Activated CD4-positive, alpha-beta T cell treated with anti-CD3 and anti-CD28 coated beads for 36 hours (primary cell): ENCODE measurements at regions of chr7 and their contacts with region 1.

Region 1: GRCh38 chr7:142782922-142783900 is 12.4 kb downstream of the PRSS2 start:
- DNase-seq: peak; percentile 87
- ATAC-seq: peak; percentile 50
- H3K4me3 Mint-ChIP-seq: peak overlapping the region; percentile 66
- H3K27ac Mint-ChIP-seq: peak overlapping the region; percentile 90
- H3K4me1 Mint-ChIP-seq: peaks cover 6% of the 10 kb centered on the region
- H3K27me3 Mint-ChIP-seq: no peaks in the 10 kb centered on the region

Region 2: DNA sequence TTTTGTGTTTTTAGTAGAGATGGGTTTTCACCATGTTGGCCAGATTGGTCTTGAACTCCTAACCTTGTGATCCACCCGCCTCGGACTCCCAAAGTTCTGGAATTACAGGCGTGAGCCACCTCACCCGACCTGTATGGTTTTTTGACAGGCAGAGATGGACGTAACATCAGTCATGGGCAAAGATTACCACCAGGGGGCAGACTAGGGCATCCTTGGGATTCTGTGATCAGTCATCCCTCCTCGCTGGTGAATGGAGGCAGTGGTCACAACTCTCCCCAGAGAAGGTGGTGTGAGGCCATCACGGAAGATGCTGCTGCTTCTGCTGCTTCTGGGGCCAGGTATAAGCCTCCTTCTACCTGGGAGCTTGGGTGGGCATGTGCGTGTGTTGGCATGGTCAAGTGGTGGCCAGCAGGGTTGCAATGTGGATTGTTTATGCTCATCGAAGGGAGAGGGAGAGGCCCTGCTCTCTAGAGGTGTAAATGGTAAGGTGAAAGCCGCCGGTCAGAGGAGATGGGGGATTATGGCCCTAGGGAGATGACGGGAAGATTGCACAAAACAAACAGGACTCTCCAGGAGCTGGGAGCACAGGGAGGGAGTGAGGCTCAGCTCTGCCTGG is 156.7 kb before region 1 on chr7:
- CTCF ChIA-PET with region 1: interaction called, 56 read pairs
- POLR2A ChIA-PET with region 1: no interaction called
- intact Hi-C with region 1: no loop called
- DNase-seq: peak; percentile 85
- ATAC-seq: peak; percentile 93
- H3K4me3 Mint-ChIP-seq: peak overlapping the region; percentile 73
- H3K27ac Mint-ChIP-seq: peak overlapping the region; percentile 90
- H3K4me1 Mint-ChIP-seq: peaks cover 5% of the 10 kb centered on the region
- H3K27me3 Mint-ChIP-seq: no peaks in the 10 kb centered on the region

Region 3: DNA sequence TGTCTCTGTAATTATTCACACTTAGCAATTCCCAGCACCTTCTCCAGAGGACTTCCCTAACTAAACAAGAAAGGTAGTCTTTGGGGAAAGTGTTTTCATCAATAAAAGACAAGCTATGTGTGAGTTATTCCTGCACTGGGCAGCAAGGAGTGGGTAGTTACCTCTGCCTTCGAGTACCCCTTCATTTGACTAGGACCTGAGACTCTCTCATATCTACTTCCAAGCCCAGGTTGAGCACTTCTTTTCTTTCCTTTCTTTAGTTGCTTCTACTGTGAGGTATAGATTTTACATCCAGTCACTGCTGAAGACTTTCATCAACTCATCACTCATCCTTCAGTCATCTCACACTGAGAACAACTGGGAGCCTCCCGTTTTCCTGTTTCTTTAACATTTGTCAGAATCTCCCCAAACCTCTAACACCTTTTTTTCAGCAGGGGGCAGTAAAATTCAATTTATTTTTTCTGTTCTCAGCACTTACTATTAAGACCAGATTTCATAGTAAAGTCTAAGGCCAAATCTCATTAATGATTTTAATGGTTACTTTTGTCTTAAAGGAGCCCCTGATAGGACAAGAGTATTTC is 114.0 kb before region 1 on chr7:
- CTCF ChIA-PET with region 1: interaction called, 21 read pairs
- POLR2A ChIA-PET with region 1: no interaction called
- intact Hi-C with region 1: loop called (anchors 1 kb)
- DNase-seq: no peak
- ATAC-seq: peak; percentile 39
- H3K4me3 Mint-ChIP-seq: no peak overlapping the region
- H3K27ac Mint-ChIP-seq: peak overlapping the region; percentile 59
- H3K4me1 Mint-ChIP-seq: peaks cover 28% of the 10 kb centered on the region
- H3K27me3 Mint-ChIP-seq: no peaks in the 10 kb centered on the region

Region 4: DNA sequence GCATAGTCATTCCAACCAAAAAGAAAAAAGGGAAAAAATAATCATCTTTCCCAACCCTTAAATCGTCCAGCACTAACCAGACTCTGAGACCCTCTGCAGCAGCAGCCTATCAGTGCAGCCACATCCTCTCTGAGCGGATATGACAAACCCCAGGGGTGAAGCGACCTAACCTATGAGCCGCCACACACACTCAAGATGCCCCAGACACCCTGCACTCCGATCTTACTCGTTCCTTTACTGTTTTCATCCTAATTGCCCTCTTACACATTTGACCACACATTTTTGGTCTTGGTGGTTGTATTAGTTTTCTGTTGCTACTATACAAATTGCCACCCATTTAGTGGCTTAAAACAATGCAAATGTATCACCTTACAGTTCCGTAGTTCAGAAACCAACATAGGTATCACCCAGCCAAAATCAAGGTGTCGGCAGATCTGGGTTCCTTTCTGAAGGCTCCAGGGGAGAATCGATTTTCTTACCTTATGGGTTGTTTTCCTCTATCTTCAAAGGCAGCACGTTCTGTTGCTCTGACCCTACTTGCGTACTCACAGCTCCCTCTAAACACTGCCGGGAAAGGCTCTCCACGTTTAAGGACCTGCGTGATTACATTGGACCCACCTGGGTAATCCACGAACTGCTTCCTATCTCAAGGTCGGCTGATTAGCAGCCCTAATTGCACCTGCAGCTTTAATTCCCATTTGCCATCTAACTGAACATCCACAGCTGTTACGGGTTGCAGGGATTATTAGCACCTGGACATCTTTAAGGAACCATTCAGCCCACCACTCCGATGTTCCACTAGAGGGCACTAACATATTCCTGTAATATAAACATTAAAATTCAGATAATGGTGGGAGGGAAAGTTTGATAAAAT is 71.2 kb before region 1 on chr7:
- CTCF ChIA-PET with region 1: interaction called, 19 read pairs
- POLR2A ChIA-PET with region 1: interaction called, 7 read pairs
- intact Hi-C with region 1: loop called (anchors 1 to 5 kb)
- DNase-seq: peak; percentile 48
- ATAC-seq: peak; percentile 86
- H3K4me3 Mint-ChIP-seq: peak overlapping the region; percentile 67
- H3K27ac Mint-ChIP-seq: peak overlapping the region; percentile 85
- H3K4me1 Mint-ChIP-seq: peaks cover 65% of the 10 kb centered on the region
- H3K27me3 Mint-ChIP-seq: no peaks in the 10 kb centered on the region